ENCODE measurements at regions of chr1 and their contacts with region 1.

Region 1: GRCh38 chr1:174262349-174263241 is 103.3 kb downstream of the RABGAP1L start:
- DNase-seq: peak; percentile 47
- CTCF ChIP-seq: peak; percentile 70

Region 2: DNA sequence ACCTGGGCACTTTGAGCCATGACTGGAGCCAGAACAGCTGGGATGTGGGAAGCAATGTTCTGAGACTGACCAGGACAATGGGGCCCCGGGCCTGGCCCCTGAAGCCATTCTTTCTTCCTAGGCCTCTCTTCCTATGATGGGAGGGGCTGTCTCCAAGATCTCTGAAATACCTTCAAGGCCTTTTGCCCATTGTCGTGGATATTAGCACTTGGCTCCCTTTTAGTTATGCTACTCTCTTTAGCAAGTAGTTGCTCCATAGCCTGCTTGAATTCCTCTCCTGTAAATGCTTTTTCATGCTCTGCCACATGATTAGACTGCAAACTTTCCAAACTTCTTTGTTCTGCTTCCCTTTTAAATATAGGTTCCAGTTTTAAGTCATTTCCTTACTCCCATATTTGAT is 474.2 kb after region 1 on chr1:
- in situ Hi-C with region 1: loop called (anchors 10 kb)
- DNase-seq: no peak
- CTCF ChIP-seq: no peak